CD4-positive, alpha-beta memory T cell (primary cell): ENCODE measurements at regions of chr2 and their contacts with region 1.

Region 1: GRCh38 chr2:189142893-189143759 is 36.4 kb downstream of the COL5A2 start:
- DNase-seq: peak; percentile 52 to 62 (median 54)
- H3K4me3 ChIP-seq: no peak overlapping the region
- H3K4me3 Mint-ChIP-seq: no peak overlapping the region
- H3K27ac ChIP-seq: no peak overlapping the region
- H3K27ac Mint-ChIP-seq: no peak overlapping the region
- H3K4me1 ChIP-seq: no peaks in the 10 kb centered on the region
- H3K4me1 Mint-ChIP-seq: no peaks in the 10 kb centered on the region
- H3K27me3 ChIP-seq: no peaks in the 10 kb centered on the region
- H3K27me3 Mint-ChIP-seq: no peaks in the 10 kb centered on the region

Region 2: DNA sequence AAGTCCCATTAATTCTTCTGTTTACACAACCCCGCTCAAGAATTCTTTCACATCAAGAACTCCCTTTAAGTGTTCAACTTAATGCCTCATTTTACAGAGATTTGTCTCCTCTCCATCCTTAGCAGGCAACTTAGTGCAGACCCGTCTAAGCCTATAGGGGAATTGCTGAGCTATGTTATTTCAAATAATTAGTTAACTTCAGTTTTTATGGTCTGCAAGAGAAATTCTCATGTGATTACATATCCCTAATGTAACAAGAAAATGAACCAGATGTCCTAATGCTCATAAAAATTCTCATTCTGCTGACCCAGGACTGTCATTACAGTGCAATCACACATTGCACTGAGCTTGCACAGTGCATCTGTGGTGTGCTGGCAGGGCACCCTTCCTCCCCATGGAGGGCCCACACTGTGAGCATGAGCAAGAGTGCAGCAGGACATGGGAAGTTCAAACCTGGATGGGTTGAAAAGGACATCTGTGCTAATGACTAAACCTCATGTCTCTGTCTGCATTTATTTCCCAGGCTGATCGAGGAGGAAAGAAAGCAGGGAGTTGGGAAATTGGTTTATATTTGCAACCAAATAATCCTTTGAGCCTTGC is 60.6 kb before region 1 on chr2:
- CTCF ChIA-PET with region 1: no interaction called
- POLR2A ChIA-PET with region 1: no interaction called
- intact Hi-C with region 1: no loop called
- DNase-seq: peak in 1 of 5 donors; percentile 23
- H3K4me3 ChIP-seq: no peak overlapping the region
- H3K4me3 Mint-ChIP-seq: no peak overlapping the region
- H3K27ac ChIP-seq: no peak overlapping the region
- H3K27ac Mint-ChIP-seq: no peak overlapping the region
- H3K4me1 ChIP-seq: no peaks in the 10 kb centered on the region
- H3K4me1 Mint-ChIP-seq: no peaks in the 10 kb centered on the region
- H3K27me3 ChIP-seq: no peaks in the 10 kb centered on the region
- H3K27me3 Mint-ChIP-seq: no peaks in the 10 kb centered on the region

Region 3: DNA sequence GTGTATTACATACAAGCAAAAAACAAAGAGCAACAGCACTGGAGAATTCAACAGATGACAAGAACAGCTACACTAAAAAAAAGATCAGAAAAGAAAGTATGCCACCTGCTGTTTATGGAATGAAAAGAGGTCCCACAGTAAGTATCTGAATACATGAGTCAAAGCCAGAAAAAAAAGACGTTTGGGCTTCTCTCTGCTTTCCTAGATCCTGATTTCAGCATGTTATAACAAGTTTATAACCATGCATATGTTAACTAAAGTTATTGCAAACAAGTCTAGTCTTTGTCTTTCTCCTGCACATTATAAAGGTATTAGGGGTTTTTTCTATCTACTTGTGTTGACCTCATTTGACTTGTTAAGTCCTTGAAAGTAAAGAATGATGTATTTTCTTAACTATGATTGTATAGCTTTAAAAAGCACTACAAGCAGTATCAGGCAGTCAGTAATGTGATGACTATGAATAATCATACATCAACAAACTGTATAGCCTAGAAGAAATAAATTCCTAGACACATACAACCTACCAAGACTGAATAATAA is 144.9 kb after region 1 on chr2:
- CTCF ChIA-PET with region 1: interaction called, 7 read pairs
- POLR2A ChIA-PET with region 1: no interaction called
- intact Hi-C with region 1: loop called (anchors 1 kb)
- DNase-seq: peak in 4 of 5 donors; percentile 22 to 36 (median 28)
- H3K4me3 ChIP-seq: no peak overlapping the region
- H3K4me3 Mint-ChIP-seq: no peak overlapping the region
- H3K27ac ChIP-seq: no peak overlapping the region
- H3K27ac Mint-ChIP-seq: peak overlapping the region in 1 of 7 donors; percentile 49
- H3K4me1 ChIP-seq: no peaks in the 10 kb centered on the region
- H3K4me1 Mint-ChIP-seq: peaks cover 4 to 15% (median 7%) of the 10 kb centered on the region in 4 donors
- H3K27me3 ChIP-seq: no peaks in the 10 kb centered on the region
- H3K27me3 Mint-ChIP-seq: no peaks in the 10 kb centered on the region

Region 4: GRCh38 chr2:189412330-189412953 is 269.3 kb after region 1 on chr2:
- CTCF ChIA-PET with region 1: interaction called, 20 read pairs
- POLR2A ChIA-PET with region 1: no interaction called
- intact Hi-C with region 1: loop called (anchors 1 kb)
- DNase-seq: peak in 4 of 5 donors; percentile 44 to 54 (median 46)
- H3K4me3 ChIP-seq: no peak overlapping the region
- H3K4me3 Mint-ChIP-seq: no peak overlapping the region
- H3K27ac ChIP-seq: no peak overlapping the region
- H3K27ac Mint-ChIP-seq: no peak overlapping the region
- H3K4me1 ChIP-seq: no peaks in the 10 kb centered on the region
- H3K4me1 Mint-ChIP-seq: peaks cover 7 to 9% (median 9%) of the 10 kb centered on the region in 4 donors
- H3K27me3 ChIP-seq: no peaks in the 10 kb centered on the region
- H3K27me3 Mint-ChIP-seq: no peaks in the 10 kb centered on the region